Natural killer cell (primary cell): ENCODE measurements at regions of chr10 and their contacts with region 1.

Region 1: GRCh38 chr10:6202684-6203330 is at the start of gene PFKFB3:
- DNase-seq: peak; percentile 84 to 94
- ATAC-seq: peak; percentile 77 to 86 (median 78)
- H3K4me3 ChIP-seq: peak within 1 kb of the TSS; percentile 59
- H3K4me3 Mint-ChIP-seq: peak within 1 kb of the TSS; percentile 94
- H3K27ac ChIP-seq: peak within 1 kb of the TSS; percentile 42
- H3K27ac Mint-ChIP-seq: peak within 1 kb of the TSS; percentile 28 to 77
- H3K4me1 ChIP-seq: peaks cover 31% of the 10 kb centered on the region
- H3K4me1 Mint-ChIP-seq: peaks cover 21 to 38% of the 10 kb centered on the region in 2 donors
- H3K27me3 ChIP-seq: peaks cover 2% of the 10 kb centered on the region
- H3K27me3 Mint-ChIP-seq: no peaks in the 10 kb centered on the region
- CTCF ChIP-seq: peak; percentile 95
- total RNA-seq, gene PFKFB3: 33.4 to 59.7 (median 39.0) TPM

Region 2: DNA sequence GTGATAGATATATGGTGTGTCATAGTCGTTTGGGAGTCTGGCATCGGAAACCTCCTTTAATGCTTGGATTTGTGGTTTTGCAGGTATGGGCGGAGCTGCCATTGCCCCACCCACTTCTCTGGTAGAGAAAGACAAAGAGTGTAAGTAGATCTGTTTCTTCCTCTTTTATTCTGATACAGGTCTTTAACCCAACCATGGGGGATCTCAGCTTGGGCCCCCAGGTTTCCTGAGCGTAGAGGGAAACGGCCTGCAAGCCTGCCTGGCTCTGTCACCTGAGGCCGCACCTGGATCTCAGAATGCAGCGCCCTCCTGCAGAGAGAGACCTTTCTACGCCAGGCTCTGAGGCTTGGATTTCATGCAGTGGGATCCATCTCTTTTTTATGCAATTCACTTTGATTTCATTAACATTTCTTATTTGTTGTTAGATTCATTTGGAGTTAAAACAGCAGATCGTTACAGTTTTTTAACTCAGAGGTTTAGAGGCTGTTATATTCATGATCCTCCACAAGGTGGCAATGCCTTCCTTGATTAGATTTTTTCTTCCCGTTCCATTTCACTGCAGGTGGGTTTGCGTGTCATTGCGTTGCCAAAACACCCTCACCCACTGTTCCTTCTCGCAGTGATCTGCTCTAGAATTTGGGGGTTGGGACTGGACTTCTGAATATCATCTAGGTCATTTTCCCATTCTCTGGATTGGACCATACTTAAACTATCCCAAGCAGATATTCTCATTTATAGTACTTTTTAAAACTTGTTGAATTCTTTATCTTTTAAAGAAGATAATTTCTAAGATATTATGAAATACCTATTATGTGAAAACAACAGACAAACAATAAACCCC is 94.0 kb before region 1 on chr10:
- intact Hi-C with region 1: loop called (anchors 10 kb)
- DNase-seq: peak in 1 of 2 donors; percentile 82
- ATAC-seq: peak; percentile 62 to 90 (median 76)
- H3K4me3 ChIP-seq: no peak overlapping the region
- H3K4me3 Mint-ChIP-seq: no peak overlapping the region
- H3K27ac ChIP-seq: no peak overlapping the region
- H3K27ac Mint-ChIP-seq: peak overlapping the region; percentile 36 to 60
- H3K4me1 ChIP-seq: peaks cover 6% of the 10 kb centered on the region
- H3K4me1 Mint-ChIP-seq: peaks cover 16 to 27% of the 10 kb centered on the region in 2 donors
- H3K27me3 ChIP-seq: no peaks in the 10 kb centered on the region
- H3K27me3 Mint-ChIP-seq: no peaks in the 10 kb centered on the region
- CTCF ChIP-seq: peak; percentile 87

Region 3: GRCh38 chr10:6163364-6164270 is 39.2 kb before region 1 on chr10:
- intact Hi-C with region 1: loop called (anchors 5 kb)
- DNase-seq: peak; percentile 91 to 96
- ATAC-seq: peak; percentile 94 to 100 (median 97)
- H3K4me3 ChIP-seq: peak overlapping the region; percentile 92
- H3K4me3 Mint-ChIP-seq: peak overlapping the region; percentile 97
- H3K27ac ChIP-seq: peak overlapping the region; percentile 88
- H3K27ac Mint-ChIP-seq: peak overlapping the region; percentile 90 to 96
- H3K4me1 ChIP-seq: peaks cover 18% of the 10 kb centered on the region
- H3K4me1 Mint-ChIP-seq: peaks cover 32 to 47% of the 10 kb centered on the region in 2 donors
- H3K27me3 ChIP-seq: no peaks in the 10 kb centered on the region
- H3K27me3 Mint-ChIP-seq: no peaks in the 10 kb centered on the region
- CTCF ChIP-seq: no peak

Region 4: GRCh38 chr10:6401562-6402348 is 198.9 kb after region 1 on chr10:
- intact Hi-C with region 1: loop called (anchors 1 kb)
- DNase-seq: peak; percentile 36 to 86
- ATAC-seq: peak; percentile 84 to 97 (median 95)
- H3K4me3 ChIP-seq: no peak overlapping the region
- H3K4me3 Mint-ChIP-seq: peak overlapping the region; percentile 7
- H3K27ac ChIP-seq: no peak overlapping the region
- H3K27ac Mint-ChIP-seq: peak overlapping the region in 1 of 2 donors; percentile 51
- H3K4me1 ChIP-seq: peaks cover 9% of the 10 kb centered on the region
- H3K4me1 Mint-ChIP-seq: peaks cover 7 to 8% of the 10 kb centered on the region in 2 donors
- H3K27me3 ChIP-seq: no peaks in the 10 kb centered on the region
- H3K27me3 Mint-ChIP-seq: peaks cover 6 to 13% of the 10 kb centered on the region in 2 donors
- CTCF ChIP-seq: peak; percentile 63

Region 5: DNA sequence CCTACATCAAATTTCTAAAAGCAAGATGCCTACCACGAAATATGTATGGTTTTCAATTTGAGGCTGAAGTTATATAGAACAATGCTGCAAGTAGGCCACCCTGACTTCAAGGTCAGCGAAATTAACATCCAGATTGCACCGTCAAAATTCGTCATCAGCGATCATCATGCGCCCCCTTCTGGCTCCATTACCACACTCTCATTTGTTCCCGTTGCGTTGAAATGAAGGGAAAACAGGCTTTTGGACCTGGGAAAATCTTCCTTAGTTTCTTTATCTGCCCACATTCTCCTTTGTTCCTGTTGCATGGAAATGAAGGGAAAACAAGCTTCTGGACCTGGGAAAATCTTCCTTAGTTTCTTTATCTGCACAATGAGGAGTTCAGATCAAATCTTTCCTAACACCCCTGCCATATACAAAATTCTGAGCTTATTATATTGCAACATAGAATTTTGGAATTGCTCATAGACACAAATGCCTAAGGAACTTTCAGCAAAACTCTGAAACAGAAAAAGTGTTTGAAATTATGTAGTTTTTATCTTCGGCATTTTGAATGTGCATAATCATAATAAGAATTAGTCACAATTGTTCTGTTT is 475.5 kb after region 1 on chr10:
- intact Hi-C with region 1: loop called (anchors 5 kb)
- DNase-seq: peak; percentile 44 to 84
- ATAC-seq: peak; percentile 56 to 69 (median 67)
- H3K4me3 ChIP-seq: no peak overlapping the region
- H3K4me3 Mint-ChIP-seq: no peak overlapping the region
- H3K27ac ChIP-seq: no peak overlapping the region
- H3K27ac Mint-ChIP-seq: no peak overlapping the region
- H3K4me1 ChIP-seq: no peaks in the 10 kb centered on the region
- H3K4me1 Mint-ChIP-seq: peaks cover 4 to 5% of the 10 kb centered on the region in 2 donors
- H3K27me3 ChIP-seq: peaks cover 4% of the 10 kb centered on the region
- H3K27me3 Mint-ChIP-seq: peaks cover 19 to 52% of the 10 kb centered on the region in 2 donors
- CTCF ChIP-seq: peak; percentile 78